Colonic mucosa (tissue), 4 donors: ENCODE measurements at regions of chr2 and their contacts with region 1.

Region 1: DNA sequence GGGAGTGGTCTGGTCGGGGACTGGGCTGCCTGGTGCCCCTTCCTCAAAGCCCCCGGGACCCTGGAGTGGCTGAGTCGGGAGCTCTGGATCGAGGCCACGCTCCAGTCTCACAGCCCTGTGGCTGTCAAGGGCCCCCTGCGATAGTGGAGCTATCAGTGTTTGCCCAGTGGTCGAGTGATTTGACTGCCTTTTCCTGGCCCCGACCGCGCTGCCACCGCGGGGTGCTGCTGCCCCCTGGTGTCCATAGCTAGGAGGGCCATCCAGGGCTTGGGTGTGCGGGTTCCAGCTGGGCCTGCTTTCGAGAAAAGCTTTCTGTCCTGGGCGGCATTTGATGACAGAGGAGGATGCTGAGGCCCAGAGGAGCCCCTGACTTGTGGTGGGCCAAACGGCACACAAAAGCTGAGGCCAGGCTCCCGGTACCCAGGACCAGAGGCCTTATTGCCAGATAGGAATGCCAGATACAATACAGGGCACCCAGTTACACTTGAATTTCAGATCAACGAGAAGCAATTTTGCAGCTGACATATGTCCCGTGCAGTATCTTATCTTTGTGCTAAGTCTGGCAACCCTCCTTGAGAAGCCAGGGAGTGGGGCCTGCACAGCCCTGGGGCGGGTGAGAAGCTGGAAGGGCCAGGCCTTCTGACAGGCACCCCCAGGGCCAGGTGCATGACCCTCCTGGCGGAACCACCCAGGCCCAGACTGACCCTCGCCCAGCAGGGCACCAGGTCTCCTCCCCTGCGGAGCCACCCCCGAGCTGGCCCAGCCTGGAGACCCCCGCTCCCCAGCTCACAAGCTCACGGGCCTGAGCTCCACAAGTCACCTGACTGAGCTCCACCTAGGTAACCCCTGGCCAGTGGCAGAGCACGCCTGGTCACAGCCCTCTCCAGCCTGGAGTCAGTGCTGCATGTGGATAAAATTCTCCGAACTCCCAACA is 13.0 kb downstream of the ODC1 start:
- DNase-seq: peak; percentile 81
- H3K4me3 ChIP-seq: no peak overlapping the region
- H3K27ac ChIP-seq: no peak overlapping the region
- H3K4me1 ChIP-seq: no peaks in the 10 kb centered on the region
- H3K27me3 ChIP-seq: no peaks in the 10 kb centered on the region
- CTCF ChIP-seq: peak; percentile 96

Region 2: DNA sequence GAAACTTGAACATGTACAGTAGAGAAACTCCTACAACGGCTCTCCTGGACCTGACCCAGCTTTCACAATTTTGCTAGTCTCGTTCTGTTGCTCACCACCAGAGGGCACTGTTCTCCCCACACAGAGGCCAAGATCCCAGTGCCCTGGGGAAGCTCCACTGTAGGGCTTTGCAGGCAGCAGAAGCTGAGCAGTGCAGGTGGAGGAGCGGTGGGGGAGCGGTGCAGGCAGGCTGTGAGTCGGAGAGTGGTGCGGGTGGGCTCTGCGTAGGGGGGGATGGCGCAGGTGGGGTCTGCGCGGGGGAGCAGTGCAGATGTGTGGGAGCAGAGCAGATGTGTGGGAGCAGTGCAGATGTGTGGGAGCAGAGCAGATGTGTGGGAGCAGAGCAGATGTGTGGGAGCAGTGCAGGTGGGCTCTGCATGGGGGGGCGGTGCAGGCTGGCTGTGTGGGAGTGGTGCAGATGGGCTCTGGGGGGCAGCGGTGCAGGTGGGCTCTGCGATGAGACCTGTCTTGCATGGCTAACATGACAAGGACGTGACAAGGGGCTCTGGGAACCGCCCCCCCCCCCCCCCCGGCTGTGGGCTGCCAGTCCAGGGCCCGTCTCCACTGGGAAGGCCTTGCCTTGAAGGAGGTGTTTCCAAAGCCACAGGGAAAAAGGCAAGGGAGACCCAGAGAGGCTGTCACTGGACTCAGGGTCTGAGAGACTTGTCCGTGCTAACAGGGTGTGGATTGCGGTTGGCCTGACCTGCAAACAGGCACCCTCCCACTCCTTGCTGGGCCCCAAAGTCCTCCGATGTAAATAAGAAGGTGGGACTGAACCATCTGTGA is 362.3 kb before region 1 on chr2:
- intact Hi-C with region 1: loop called (anchors 5 kb)
- DNase-seq: peak; percentile 86
- H3K4me3 ChIP-seq: no peak overlapping the region
- H3K27ac ChIP-seq: no peak overlapping the region
- H3K4me1 ChIP-seq: no peaks in the 10 kb centered on the region
- H3K27me3 ChIP-seq: peaks cover 1% of the 10 kb centered on the region
- CTCF ChIP-seq: peak; percentile 78

Region 3: GRCh38 chr2:10122386-10123280 is 312.5 kb before region 1 on chr2 and contains the start of gene RRM2:
- intact Hi-C with region 1: loop called (anchors 2 kb)
- DNase-seq: peak; percentile 96
- H3K4me3 ChIP-seq: peak within 1 kb of the TSS; percentile 84
- H3K27ac ChIP-seq: peak within 1 kb of the TSS; percentile 83
- H3K4me1 ChIP-seq: peaks cover 34% of the 10 kb centered on the region
- H3K27me3 ChIP-seq: no peaks in the 10 kb centered on the region
- CTCF ChIP-seq: no peak
- total RNA-seq, gene RRM2: 54.3 to 216 TPM

Region 4: DNA sequence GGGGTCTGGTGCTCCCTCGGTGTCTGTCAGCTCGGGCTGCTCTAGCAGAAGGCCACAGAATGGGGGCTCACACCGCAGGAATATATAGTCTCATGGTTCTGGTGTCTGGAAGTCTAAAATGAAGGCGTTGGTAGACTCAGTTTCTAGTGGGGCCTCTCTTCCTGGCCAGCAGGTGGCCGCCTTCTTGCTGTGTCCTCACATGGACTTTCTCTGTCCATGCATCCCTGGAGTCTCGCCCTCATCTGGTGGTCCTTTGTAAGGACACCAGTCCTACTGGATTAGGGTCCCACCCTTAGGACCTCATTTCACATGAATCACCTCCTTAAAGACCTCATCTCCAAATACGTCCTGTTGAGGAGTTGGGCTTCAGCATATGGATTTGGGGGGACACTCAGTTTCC is 246.9 kb before region 1 on chr2:
- intact Hi-C with region 1: no loop called
- DNase-seq: no peak
- H3K4me3 ChIP-seq: no peak overlapping the region
- H3K27ac ChIP-seq: no peak overlapping the region
- H3K4me1 ChIP-seq: no peaks in the 10 kb centered on the region
- H3K27me3 ChIP-seq: no peaks in the 10 kb centered on the region
- CTCF ChIP-seq: peak; percentile 31

Region 5: GRCh38 chr2:10477443-10478297 is 42.5 kb after region 1 on chr2:
- intact Hi-C with region 1: no loop called
- DNase-seq: no peak
- H3K4me3 ChIP-seq: no peak overlapping the region
- H3K27ac ChIP-seq: no peak overlapping the region
- H3K4me1 ChIP-seq: no peaks in the 10 kb centered on the region
- H3K27me3 ChIP-seq: no peaks in the 10 kb centered on the region
- CTCF ChIP-seq: no peak

Region 6: DNA sequence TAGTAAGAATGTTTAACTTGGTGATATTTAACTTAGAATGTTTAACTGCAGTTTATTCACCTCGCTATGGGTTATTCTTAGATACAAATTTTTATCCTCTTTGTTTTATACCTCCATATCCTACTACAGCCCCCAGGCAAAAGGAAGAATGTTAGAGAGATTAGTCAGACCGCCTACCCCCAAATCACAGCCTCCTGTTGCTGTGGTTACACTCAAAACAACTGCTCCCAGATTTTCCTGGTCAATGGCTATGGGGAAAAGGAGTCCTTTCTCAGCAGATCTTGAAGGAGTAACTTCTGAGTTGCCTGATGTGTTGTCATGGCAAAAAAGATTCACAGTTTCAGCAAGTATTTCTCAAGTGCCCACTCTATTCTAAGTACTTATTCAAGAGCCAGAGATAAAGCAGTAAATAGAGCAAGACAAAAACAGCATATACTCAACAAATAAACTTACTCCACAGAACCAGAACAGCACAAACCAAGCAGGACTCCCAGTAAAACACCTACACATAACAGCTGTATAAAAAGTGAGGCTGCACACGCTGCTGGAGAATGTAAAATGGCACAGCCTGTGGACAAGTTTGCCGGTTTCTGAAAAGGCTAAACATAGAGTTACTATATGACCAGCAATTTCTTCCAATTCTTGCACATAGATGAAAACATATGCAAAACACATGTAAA is 149.8 kb after region 1 on chr2:
- intact Hi-C with region 1: no loop called
- DNase-seq: no peak
- H3K4me3 ChIP-seq: no peak overlapping the region
- H3K27ac ChIP-seq: no peak overlapping the region
- H3K4me1 ChIP-seq: peaks cover 5% of the 10 kb centered on the region
- H3K27me3 ChIP-seq: no peaks in the 10 kb centered on the region
- CTCF ChIP-seq: no peak

Region 7: DNA sequence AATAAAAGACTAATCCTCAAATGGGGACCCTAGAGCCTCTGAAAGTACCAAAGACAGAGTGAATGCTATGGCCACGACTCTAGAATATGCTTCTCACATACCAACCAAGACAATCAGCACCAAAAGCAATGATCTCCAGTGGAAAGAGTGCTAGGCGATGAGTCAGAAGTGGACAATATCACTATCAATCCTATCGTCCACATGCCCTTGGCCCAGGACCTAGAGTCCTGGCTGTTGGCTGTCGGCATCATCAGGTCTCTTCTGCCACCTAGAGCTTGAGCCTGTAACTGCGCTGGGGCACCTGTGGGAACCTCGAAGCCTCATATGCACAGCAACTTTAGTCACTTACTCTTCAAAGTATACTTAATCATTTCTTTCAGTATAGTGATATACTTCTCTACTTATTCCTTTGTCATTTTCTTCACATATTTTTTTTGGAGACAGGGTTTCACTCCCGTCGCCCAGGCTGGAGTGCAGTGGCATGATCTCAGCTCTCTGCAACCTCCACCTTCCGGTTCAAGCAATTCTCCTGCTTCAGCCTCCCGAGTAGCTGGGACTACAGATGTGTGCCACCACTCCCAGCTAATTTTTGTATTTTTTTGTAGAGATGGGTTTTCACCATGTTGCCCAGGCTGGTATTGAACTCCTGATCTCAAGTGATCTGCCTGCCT is 224.9 kb after region 1 on chr2:
- intact Hi-C with region 1: loop called (anchors 5 kb)
- DNase-seq: peak; percentile 62
- H3K4me3 ChIP-seq: no peak overlapping the region
- H3K27ac ChIP-seq: no peak overlapping the region
- H3K4me1 ChIP-seq: no peaks in the 10 kb centered on the region
- H3K27me3 ChIP-seq: no peaks in the 10 kb centered on the region
- CTCF ChIP-seq: peak; percentile 88